MCF 10A (cell line): ENCODE measurements at regions of chr1 and their contacts with region 1.

Region 1: GRCh38 chr1:234599617-234600417 is 10.2 kb downstream of the IRF2BP2 start:
- DNase-seq: peak; percentile 93
- H3K4me3 Mint-ChIP-seq: peak overlapping the region; percentile 80
- H3K27ac Mint-ChIP-seq: peak overlapping the region; percentile 90
- H3K4me1 Mint-ChIP-seq: peaks cover 41% of the 10 kb centered on the region
- H3K27me3 Mint-ChIP-seq: no peaks in the 10 kb centered on the region
- CTCF ChIP-seq: no peak

Region 2: DNA sequence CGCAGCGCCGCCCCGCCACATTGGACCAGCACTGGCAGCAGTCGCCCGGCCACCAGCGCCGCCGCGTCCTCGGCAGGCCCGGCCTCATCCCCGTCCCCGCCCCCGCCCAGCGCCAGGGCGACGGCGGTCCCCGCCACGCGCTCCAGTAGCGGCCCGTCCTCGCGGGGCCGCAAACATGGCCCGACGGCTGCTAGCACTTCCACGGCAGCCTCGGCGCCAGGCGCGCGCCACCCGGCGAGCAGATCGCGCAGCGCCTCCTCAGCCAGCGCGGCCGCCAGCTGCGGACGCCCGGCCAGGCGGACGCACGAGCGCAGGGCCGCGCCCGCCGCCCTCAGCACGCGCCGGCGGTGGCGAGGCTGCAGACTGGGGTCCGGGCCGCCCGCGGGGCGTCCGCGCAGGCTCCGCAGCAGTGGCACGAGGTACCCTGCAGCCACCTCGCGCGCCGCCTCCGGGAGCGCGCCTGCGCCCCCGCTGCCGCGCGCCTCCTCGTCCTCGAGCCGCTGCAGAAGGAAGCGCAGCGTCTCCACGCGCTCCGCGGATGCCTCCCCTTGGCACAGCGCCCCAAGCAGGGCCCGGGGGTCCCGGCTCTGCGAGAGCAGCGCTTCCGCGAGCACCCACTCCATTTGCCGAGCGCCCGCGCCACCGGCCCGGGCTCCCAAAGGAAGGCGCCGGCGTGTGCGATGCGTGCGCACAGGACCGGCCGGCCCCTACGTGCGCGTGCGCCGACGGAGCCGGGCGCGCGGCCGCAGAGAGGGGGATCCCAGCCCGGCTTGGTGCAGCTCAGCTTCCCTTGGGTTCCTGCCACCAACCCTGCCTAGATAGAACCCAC is 121.1 kb before region 1 on chr1 and contains the start of gene TARBP1:
- CTCF ChIA-PET with region 1: no interaction called
- POLR2A ChIA-PET with region 1: interaction called, 63 read pairs
- intact Hi-C with region 1: no loop called
- DNase-seq: peak; percentile 89
- H3K4me3 Mint-ChIP-seq: peak within 1 kb of the TSS; percentile 77
- H3K27ac Mint-ChIP-seq: no peak within 1 kb of the TSS
- H3K4me1 Mint-ChIP-seq: peaks cover 31% of the 10 kb centered on the region
- H3K27me3 Mint-ChIP-seq: peaks cover 23% of the 10 kb centered on the region
- CTCF ChIP-seq: no peak
- total RNA-seq, gene TARBP1: 45.5 and 52.5 TPM in 2 replicates

Region 3: GRCh38 chr1:234515821-234516241 is 84.0 kb before region 1 on chr1:
- CTCF ChIA-PET with region 1: interaction called, 6 read pairs
- POLR2A ChIA-PET with region 1: interaction called, 904 read pairs
- intact Hi-C with region 1: no loop called
- DNase-seq: peak; percentile 76
- H3K4me3 Mint-ChIP-seq: no peak overlapping the region
- H3K27ac Mint-ChIP-seq: peak overlapping the region; percentile 80
- H3K4me1 Mint-ChIP-seq: peaks cover 27% of the 10 kb centered on the region
- H3K27me3 Mint-ChIP-seq: no peaks in the 10 kb centered on the region
- CTCF ChIP-seq: no peak

Region 4: GRCh38 chr1:234544087-234544579 is 55.7 kb before region 1 on chr1:
- CTCF ChIA-PET with region 1: interaction called, 3 read pairs
- POLR2A ChIA-PET with region 1: interaction called, 467 read pairs
- intact Hi-C with region 1: no loop called
- DNase-seq: peak; percentile 96
- H3K4me3 Mint-ChIP-seq: no peak overlapping the region
- H3K27ac Mint-ChIP-seq: peak overlapping the region; percentile 80
- H3K4me1 Mint-ChIP-seq: peaks cover 36% of the 10 kb centered on the region
- H3K27me3 Mint-ChIP-seq: no peaks in the 10 kb centered on the region
- CTCF ChIP-seq: no peak

Region 5: DNA sequence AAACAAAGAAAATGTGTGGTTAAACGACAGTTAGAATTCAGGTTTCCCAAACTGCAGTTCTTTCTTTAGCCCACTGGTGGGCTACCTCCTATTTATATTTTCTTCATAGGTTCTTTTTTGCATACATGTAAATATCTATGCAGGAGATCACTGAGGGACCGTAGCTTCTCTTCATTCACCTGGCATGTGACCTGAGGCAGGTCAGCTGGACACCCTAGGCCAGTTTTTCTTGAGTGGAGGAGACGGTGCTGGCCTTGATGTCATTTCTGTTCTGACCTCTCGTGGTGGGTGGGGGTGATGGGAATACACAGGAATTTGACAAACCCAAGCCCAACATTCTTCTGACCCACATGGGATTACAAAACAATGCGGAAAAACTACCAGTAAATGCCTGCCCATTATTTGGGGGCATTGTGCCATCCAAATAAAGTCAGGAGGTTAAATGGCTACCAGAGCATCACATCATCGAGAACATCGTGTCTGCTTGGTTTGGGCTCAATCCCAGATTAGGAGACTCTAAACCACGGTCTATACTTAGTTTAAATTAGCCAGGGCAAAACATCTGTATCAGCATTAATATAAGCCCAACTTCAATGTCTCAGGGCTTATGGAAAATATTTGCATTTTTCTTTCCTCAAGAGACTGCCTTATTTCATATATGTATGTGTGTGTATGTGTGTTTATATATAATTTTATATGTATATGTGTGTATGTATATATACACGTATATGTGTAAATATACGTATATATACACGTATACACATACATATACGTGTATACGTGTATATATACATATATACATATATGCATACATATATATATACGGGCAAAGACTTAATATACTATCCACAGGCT is 17.5 kb after region 1 on chr1:
- CTCF ChIA-PET with region 1: interaction called, 12 read pairs
- POLR2A ChIA-PET with region 1: interaction called, 416 read pairs
- intact Hi-C with region 1: no loop called
- DNase-seq: peak; percentile 80
- H3K4me3 Mint-ChIP-seq: no peak overlapping the region
- H3K27ac Mint-ChIP-seq: peak overlapping the region; percentile 99
- H3K4me1 Mint-ChIP-seq: peaks cover 70% of the 10 kb centered on the region
- H3K27me3 Mint-ChIP-seq: no peaks in the 10 kb centered on the region
- CTCF ChIP-seq: peak; percentile 28

Region 6: GRCh38 chr1:235067263-235068172 is 467.7 kb after region 1 on chr1:
- CTCF ChIA-PET with region 1: interaction called, 5 read pairs
- POLR2A ChIA-PET with region 1: interaction called, 114 read pairs
- intact Hi-C with region 1: no loop called
- DNase-seq: peak; percentile 100
- H3K4me3 Mint-ChIP-seq: peak overlapping the region; percentile 54
- H3K27ac Mint-ChIP-seq: peak overlapping the region; percentile 97
- H3K4me1 Mint-ChIP-seq: peaks cover 53% of the 10 kb centered on the region
- H3K27me3 Mint-ChIP-seq: no peaks in the 10 kb centered on the region
- CTCF ChIP-seq: no peak

Region 7: DNA sequence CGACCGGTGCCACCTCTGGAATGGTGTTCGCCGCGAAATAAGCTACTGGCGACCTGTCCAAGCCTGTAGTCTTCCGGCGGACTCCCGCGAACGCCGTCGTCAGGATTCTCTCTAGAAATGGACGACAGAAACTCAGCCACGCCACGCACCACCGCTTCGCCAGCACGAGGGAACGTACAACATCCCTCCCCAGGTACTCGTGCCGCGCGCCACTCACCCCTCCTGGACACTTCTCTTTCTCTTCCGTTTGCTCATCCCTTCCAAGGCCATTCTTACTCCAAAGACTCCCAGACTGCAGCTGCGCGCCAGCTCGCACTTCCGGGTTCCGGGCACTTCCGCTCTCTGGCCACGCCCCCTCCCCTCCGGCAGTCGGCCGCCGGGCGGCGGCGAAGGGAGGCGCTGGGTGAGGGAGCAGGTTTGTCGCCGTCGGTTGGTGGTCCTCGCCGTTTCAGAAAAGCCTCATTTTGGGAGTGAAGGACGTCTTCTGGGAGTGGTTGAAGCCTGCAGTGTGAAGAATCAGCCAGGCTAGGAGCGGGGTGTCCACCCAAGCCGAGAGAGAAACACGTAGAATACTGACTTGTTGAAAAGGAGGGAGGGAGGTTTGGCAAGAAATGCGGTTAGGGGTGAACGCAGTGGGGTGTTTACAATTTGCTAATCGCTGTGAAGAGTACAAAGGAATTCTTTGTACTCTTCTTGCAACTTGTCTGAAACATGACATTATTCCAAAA is 561.3 kb after region 1 on chr1 and contains the start of gene RBM34:
- CTCF ChIA-PET with region 1: no interaction called
- POLR2A ChIA-PET with region 1: interaction called, 11 read pairs
- intact Hi-C with region 1: no loop called
- DNase-seq: peak; percentile 97
- H3K4me3 Mint-ChIP-seq: peak within 1 kb of the TSS; percentile 84
- H3K27ac Mint-ChIP-seq: peak within 1 kb of the TSS; percentile 95
- H3K4me1 Mint-ChIP-seq: peaks cover 14% of the 10 kb centered on the region
- H3K27me3 Mint-ChIP-seq: no peaks in the 10 kb centered on the region
- CTCF ChIP-seq: no peak
- total RNA-seq, gene RBM34: 150 and 184 TPM in 2 replicates